ENCODE measurements at regions of chrX and their contacts with region 1.

Region 1: DNA sequence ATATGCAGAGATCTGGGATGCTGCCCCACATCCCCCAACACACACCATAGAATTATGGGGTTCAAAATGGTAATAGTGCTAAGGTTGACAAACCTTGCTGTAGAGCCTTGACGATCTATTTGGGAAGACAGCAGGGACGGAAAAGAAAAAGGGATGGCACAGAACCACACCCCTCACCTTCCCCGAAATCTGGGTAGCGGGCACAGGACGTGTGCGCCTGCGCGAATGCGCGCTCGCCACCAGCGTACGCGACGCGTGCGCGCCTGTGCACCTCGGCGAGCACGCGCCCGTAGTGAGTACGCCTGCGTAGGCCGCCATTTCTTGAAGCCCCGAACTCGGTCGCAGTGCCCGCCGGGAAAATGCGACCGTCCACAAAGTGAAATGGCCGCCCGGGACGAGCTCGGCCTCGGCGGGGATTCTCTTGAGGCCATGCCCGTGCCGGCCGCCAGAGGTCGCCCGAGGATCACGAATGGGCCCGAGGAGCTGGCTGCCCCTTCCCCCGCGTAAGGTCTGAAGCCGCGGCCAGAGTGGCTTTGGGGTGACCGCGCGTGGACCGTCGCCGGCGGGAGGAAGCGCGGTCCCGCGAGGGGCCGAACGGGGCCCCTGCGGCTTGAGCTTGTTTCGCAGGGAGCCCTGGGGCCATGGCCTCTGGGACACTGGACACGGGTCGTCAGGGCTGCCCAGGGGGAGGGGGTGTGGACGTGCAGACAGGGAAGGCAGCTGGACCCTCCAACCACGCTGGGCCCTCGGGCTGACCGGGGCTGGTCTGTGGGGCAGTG is 43.6 kb downstream of the ZNF185 start:
- DNase-seq: peak; percentile 92
- ATAC-seq: peak; percentile 96
- H3K4me3 Mint-ChIP-seq: peak overlapping the region; percentile 78
- H3K27ac Mint-ChIP-seq: peak overlapping the region; percentile 77
- H3K4me1 Mint-ChIP-seq: peaks cover 5% of the 10 kb centered on the region
- H3K27me3 Mint-ChIP-seq: no peaks in the 10 kb centered on the region

Region 2: DNA sequence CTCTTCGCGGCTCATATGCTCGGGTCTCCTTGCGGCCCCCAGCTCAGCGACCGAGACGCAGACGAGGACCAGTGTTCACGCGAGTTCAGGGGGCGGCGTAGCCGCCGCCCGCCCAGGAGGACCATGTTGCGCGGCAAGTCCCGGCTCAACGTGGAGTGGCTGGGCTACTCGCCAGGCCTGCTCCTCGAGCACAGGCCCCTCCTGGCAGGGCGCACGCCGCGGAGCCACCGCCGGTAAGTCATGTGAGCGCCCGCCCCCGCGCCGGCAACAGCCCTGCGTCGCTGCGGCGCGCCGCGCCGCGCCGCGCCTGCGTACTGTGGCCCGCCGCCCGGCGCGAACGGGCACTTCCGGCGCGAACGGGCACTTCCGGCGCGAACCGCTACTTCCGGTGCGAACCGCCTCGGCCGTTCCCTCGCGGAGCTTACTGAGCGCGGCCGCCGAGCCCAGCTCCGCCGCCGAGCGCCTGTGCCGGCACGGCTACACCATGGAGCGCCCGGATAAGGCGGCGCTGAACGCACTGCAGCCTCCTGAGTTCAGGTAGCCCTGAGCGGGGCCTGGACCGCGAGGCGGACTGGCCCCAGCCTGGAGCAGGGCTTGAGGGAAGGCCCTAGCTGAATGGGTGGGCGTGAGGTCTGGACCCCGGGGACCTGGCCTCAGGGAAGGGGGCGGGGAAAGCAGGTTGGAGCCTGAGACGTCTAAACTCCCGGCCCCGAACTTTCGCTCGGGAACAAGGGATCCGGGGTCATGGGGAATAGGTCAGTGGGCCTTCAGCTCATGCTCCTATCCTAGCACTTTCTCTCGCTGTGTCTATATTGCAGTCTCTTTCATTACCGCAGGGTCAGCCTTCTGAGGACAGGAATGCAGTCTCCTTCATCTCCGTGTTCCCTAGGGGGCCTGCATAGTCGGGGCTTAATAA is 1544.4 kb before region 1 on chrX and contains the start of gene VMA21:
- CTCF ChIA-PET with region 1: no interaction called
- POLR2A ChIA-PET with region 1: no interaction called
- intact Hi-C with region 1: loop called in 1 of 2 experiments (anchors 2 kb)
- DNase-seq: peak; percentile 90
- ATAC-seq: peak; percentile 80
- H3K4me3 Mint-ChIP-seq: peak within 1 kb of the TSS; percentile 84
- H3K27ac Mint-ChIP-seq: peak within 1 kb of the TSS; percentile 94
- H3K4me1 Mint-ChIP-seq: peaks cover 49% of the 10 kb centered on the region
- H3K27me3 Mint-ChIP-seq: no peaks in the 10 kb centered on the region
- total RNA-seq, gene VMA21: 42.1 to 43.0 TPM

Region 3: DNA sequence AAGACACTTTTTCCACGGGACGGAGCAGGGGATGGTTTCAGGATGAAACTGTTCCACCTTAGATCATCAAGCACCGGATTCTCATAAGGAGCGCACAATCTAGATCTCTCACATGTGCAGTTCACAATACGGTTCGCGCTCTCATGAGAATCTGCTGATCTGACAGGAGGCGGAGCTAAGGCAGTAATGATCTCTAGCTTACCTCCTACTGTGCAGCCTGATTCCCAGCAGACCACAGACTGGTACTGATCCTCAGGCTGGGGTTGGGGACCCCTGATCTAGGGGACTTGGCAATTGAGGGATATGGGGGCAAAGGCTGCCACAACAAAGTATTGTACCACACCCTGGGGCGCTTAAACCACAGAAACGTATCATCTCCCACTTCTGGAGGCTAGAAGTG is 17.9 kb before region 1 on chrX:
- CTCF ChIA-PET with region 1: no interaction called
- POLR2A ChIA-PET with region 1: no interaction called
- intact Hi-C with region 1: no loop called
- DNase-seq: no peak
- ATAC-seq: no peak
- H3K4me3 Mint-ChIP-seq: no peak overlapping the region
- H3K27ac Mint-ChIP-seq: no peak overlapping the region
- H3K4me1 Mint-ChIP-seq: peaks cover 9% of the 10 kb centered on the region
- H3K27me3 Mint-ChIP-seq: no peaks in the 10 kb centered on the region

Region 4: DNA sequence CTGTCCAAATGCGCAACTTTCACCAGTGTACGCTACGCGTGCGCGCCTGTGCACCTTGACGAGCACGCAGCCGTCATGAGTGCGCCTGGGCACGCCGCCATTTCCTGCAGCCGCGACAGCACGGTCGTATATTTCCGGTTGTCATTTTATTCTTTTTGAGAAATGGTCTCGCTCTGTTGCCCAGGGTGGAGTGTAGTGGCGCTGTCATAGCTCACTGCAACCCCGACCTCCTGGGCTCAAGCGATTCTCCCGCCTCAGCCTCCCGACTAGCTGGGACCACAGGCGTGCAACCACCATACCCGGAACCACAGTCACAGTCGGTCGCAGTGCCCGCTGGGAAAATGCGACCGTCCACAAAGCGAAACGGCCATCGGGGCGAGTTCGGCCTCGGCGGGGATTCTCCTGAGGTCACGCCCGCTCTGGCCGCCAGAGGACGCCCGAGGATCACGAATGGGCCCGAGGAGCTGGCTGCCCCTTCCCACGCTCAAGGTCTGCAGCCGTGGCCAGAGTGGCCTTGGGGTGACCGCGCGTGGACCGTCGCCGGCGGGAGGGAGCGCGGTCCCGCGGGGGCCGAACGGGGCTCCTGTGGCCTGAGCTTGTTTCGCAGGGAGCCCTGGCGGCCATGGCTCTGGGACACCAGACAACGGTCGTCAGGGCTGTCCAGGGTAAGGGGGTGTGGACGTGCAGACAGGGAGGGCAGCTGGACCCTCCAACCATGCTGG is 91.0 kb after region 1 on chrX:
- CTCF ChIA-PET with region 1: interaction called, 8 read pairs
- POLR2A ChIA-PET with region 1: no interaction called
- intact Hi-C with region 1: loop called in 1 of 2 experiments (anchors 5 kb)
- DNase-seq: peak; percentile 78
- ATAC-seq: peak; percentile 85
- H3K4me3 Mint-ChIP-seq: peak overlapping the region; percentile 76
- H3K27ac Mint-ChIP-seq: peak overlapping the region; percentile 84
- H3K4me1 Mint-ChIP-seq: peaks cover 2% of the 10 kb centered on the region
- H3K27me3 Mint-ChIP-seq: no peaks in the 10 kb centered on the region

Region 5: GRCh38 chrX:153157450-153157849 is 215.9 kb after region 1 on chrX:
- CTCF ChIA-PET with region 1: no interaction called
- POLR2A ChIA-PET with region 1: no interaction called
- intact Hi-C with region 1: no loop called
- DNase-seq: no peak
- ATAC-seq: no peak
- H3K4me3 Mint-ChIP-seq: no peak overlapping the region
- H3K27ac Mint-ChIP-seq: no peak overlapping the region
- H3K4me1 Mint-ChIP-seq: no peaks in the 10 kb centered on the region
- H3K27me3 Mint-ChIP-seq: peaks cover 10% of the 10 kb centered on the region

Region 6: GRCh38 chrX:153411255-153411987 is 469.9 kb after region 1 on chrX and contains the start of gene ZFP92:
- CTCF ChIA-PET with region 1: no interaction called
- POLR2A ChIA-PET with region 1: no interaction called
- intact Hi-C with region 1: loop called in 1 of 2 experiments (anchors 5 kb)
- DNase-seq: peak; percentile 42
- ATAC-seq: peak; percentile 68
- H3K4me3 Mint-ChIP-seq: peak within 1 kb of the TSS; percentile 64
- H3K27ac Mint-ChIP-seq: no peak within 1 kb of the TSS
- H3K4me1 Mint-ChIP-seq: peaks cover 7% of the 10 kb centered on the region
- H3K27me3 Mint-ChIP-seq: no peaks in the 10 kb centered on the region
- total RNA-seq, gene ZFP92: 0.98 TPM

Region 7: GRCh38 chrX:153507484-153508178 is 566.1 kb after region 1 on chrX:
- CTCF ChIA-PET with region 1: interaction called, 8 read pairs
- POLR2A ChIA-PET with region 1: no interaction called
- intact Hi-C with region 1: loop called in 1 of 2 experiments (anchors 1 kb)
- DNase-seq: peak; percentile 89
- ATAC-seq: peak; percentile 100
- H3K4me3 Mint-ChIP-seq: no peak overlapping the region
- H3K27ac Mint-ChIP-seq: no peak overlapping the region
- H3K4me1 Mint-ChIP-seq: no peaks in the 10 kb centered on the region
- H3K27me3 Mint-ChIP-seq: no peaks in the 10 kb centered on the region

Region 8: GRCh38 chrX:153662266-153662665 is 720.7 kb after region 1 on chrX:
- CTCF ChIA-PET with region 1: interaction called, 20 read pairs
- POLR2A ChIA-PET with region 1: no interaction called
- intact Hi-C with region 1: loop called in 1 of 2 experiments (anchors 1 kb)
- DNase-seq: peak; percentile 73
- ATAC-seq: no peak
- H3K4me3 Mint-ChIP-seq: no peak overlapping the region
- H3K27ac Mint-ChIP-seq: no peak overlapping the region
- H3K4me1 Mint-ChIP-seq: peaks cover 3% of the 10 kb centered on the region
- H3K27me3 Mint-ChIP-seq: peaks cover 11% of the 10 kb centered on the region